Breast epithelium (tissue), 4 donors: ENCODE measurements at regions of chr1 and their contacts with region 1.

Region 1: DNA sequence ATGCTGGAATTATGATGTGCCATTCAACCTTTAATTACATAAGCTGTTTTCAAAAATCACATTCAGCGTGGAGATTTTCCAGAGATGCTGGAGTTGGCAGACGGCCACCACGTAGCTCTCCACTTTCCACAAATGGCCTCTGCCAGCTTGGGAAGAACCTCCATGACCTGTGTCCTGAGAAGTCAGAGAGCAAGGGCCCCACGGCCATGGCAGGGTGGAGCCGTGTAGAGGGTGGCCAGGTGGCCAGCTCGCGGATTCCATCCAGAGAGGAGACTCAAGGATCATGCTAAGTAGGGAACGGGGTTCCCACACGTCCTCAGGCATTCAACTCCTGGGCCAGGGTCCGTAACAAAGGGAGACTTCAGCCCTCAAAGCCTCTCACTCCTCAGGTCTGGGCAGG is 1.3 kb upstream of the GALE start:
- DNase-seq: no peak
- H3K4me3 ChIP-seq: no peak overlapping the region
- H3K27ac ChIP-seq: peak overlapping the region; percentile 92
- H3K4me1 ChIP-seq: peaks cover 6% of the 10 kb centered on the region in 2 donors
- H3K27me3 ChIP-seq: no peaks in the 10 kb centered on the region
- CTCF ChIP-seq: no peak
- POLR2A ChIP-seq: no peak

Region 2: GRCh38 chr1:22814176-22815042 is 987.5 kb before region 1 on chr1:
- intact Hi-C with region 1: no loop called
- DNase-seq: peak in 1 of 2 donors; percentile 22
- H3K4me3 ChIP-seq: no peak overlapping the region
- H3K27ac ChIP-seq: peak overlapping the region in 1 of 2 donors; percentile 12
- H3K4me1 ChIP-seq: peaks cover 0 to 3% of the 10 kb centered on the region in 2 donors
- H3K27me3 ChIP-seq: no peaks in the 10 kb centered on the region
- CTCF ChIP-seq: no peak
- POLR2A ChIP-seq: no peak

Region 3: DNA sequence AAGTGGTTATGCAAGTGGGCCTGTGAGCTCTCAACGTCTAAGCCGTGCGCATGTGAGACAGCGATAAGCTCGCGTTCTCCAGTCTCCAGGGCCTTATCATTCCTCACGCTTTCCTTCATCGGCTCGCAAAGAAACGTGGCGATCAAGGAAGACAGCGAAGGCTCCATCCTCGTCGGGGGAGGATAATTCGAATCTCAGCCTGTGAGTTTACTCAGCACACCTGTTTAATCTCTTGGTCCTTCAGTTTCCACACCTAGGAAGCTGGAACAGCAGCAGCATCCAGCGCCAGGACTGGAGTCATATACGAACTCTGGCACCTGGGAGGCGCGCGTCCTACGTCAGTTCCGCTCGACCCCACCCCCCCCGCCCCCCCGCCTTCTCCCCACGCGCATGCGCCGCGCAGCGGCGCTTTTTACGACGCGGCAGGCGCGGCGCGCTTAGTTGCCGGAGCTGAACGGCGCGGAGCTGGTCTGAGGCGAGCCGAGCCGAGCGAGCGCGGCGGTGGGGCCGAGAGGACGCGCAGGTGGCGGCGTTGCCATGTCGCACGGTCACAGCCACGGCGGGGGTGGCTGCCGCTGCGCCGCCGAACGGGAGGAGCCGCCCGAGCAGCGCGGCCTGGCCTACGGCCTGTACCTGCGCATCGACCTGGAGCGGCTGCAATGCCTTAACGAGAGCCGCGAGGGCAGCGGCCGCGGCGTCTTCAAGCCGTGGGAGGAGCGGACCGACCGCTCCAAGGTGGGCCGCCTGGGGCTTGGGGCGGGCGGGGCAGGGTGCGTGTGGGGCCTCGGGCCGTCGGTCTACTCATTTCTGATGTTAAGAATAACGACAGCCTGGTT is 23.7 kb before region 1 on chr1 and contains the start of gene PITHD1:
- intact Hi-C with region 1: loop called (anchors 1 kb)
- DNase-seq: peak; percentile 67 to 74
- H3K4me3 ChIP-seq: peak within 1 kb of the TSS; percentile 83 to 93 (median 88)
- H3K27ac ChIP-seq: peak within 1 kb of the TSS; percentile 92 to 94
- H3K4me1 ChIP-seq: peaks cover 3 to 12% of the 10 kb centered on the region in 2 donors
- H3K27me3 ChIP-seq: no peaks in the 10 kb centered on the region
- CTCF ChIP-seq: no peak
- POLR2A ChIP-seq: peak; percentile 44
- total RNA-seq, gene PITHD1: 46.9 to 62.8 (median 60.3) TPM